T-cell (primary cell): ENCODE measurements at regions of chr4 and their contacts with region 1.

Region 1: GRCh38 chr4:159460371-159460770 is 357.5 kb downstream of the RAPGEF2 start:
- DNase-seq: no peak
- ATAC-seq: no peak
- H3K4me3 ChIP-seq: no peak overlapping the region
- H3K4me3 Mint-ChIP-seq: no peak overlapping the region
- H3K27ac ChIP-seq: no peak overlapping the region
- H3K27ac Mint-ChIP-seq: no peak overlapping the region
- H3K4me1 ChIP-seq: no peaks in the 10 kb centered on the region
- H3K4me1 Mint-ChIP-seq: peaks cover 0 to 3% (median 3%) of the 10 kb centered on the region in 3 donors
- H3K27me3 ChIP-seq: no peaks in the 10 kb centered on the region
- H3K27me3 Mint-ChIP-seq: no peaks in the 10 kb centered on the region

Region 2: DNA sequence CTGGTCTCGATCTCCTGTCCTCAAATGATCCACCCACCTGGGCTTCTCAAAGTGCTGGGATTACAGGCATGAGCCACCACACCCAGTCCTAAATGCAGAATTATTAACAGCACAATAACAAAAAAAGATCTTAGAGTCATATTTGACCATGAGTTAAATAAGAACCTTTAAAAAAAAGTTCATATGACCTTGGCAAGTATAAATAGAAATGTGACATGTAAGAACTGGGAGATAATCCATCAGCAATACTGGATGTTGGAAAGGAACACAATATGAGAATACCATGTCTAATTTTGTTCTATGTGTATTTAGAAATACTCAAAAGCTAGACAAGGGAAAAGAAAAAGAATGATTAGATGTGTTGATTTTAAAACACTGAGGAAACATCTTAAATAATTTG is 125.9 kb before region 1 on chr4:
- CTCF ChIA-PET with region 1: interaction called in 1 of 2 experiments, 10 read pairs
- POLR2A ChIA-PET with region 1: no interaction called
- DNase-seq: no peak
- ATAC-seq: no peak
- H3K4me3 ChIP-seq: no peak overlapping the region
- H3K4me3 Mint-ChIP-seq: no peak overlapping the region
- H3K27ac ChIP-seq: no peak overlapping the region
- H3K27ac Mint-ChIP-seq: no peak overlapping the region
- H3K4me1 ChIP-seq: no peaks in the 10 kb centered on the region
- H3K4me1 Mint-ChIP-seq: no peaks in the 10 kb centered on the region
- H3K27me3 ChIP-seq: no peaks in the 10 kb centered on the region
- H3K27me3 Mint-ChIP-seq: no peaks in the 10 kb centered on the region

Region 3: GRCh38 chr4:159446266-159446976 is 13.9 kb before region 1 on chr4:
- CTCF ChIA-PET with region 1: no interaction called
- POLR2A ChIA-PET with region 1: no interaction called
- DNase-seq: peak in 1 of 35 experiments; percentile 28
- ATAC-seq: peak in 2 of 4 experiments; percentile 54
- H3K4me3 ChIP-seq: no peak overlapping the region
- H3K4me3 Mint-ChIP-seq: no peak overlapping the region
- H3K27ac ChIP-seq: no peak overlapping the region
- H3K27ac Mint-ChIP-seq: no peak overlapping the region
- H3K4me1 ChIP-seq: no peaks in the 10 kb centered on the region
- H3K4me1 Mint-ChIP-seq: no peaks in the 10 kb centered on the region
- H3K27me3 ChIP-seq: peaks cover 0 to 3% of the 10 kb centered on the region in 2 experiments
- H3K27me3 Mint-ChIP-seq: peaks cover 7 to 20% of the 10 kb centered on the region in 2 donors

Region 4: DNA sequence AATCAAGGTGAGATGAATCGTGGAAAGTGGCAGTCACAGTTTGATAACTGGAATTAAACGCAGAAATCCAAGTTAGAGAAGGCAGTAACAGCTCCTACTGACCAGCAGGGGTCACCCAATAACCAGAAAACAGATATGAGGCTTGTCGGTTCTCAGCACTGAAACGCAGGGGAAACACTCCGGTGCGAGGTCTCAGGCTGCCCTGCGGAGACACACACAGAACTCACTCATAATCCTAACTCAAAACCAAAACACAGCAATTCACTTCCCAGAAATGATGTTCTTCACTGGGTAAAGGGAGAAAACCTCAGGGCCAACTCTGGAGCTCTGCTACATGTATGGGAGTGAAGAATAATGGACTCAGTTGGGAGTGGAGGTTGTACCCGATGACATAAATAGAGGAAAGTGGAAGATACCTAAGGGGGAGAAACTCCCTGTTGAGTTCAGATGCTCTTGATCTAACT is 26.9 kb after region 1 on chr4:
- CTCF ChIA-PET with region 1: no interaction called
- POLR2A ChIA-PET with region 1: interaction called in 1 of 2 experiments, 11 read pairs
- DNase-seq: peak in 5 of 35 experiments; percentile 2 to 51 (median 5)
- ATAC-seq: peak in 1 of 4 experiments; percentile 43
- H3K4me3 ChIP-seq: no peak overlapping the region
- H3K4me3 Mint-ChIP-seq: no peak overlapping the region
- H3K27ac ChIP-seq: no peak overlapping the region
- H3K27ac Mint-ChIP-seq: no peak overlapping the region
- H3K4me1 ChIP-seq: no peaks in the 10 kb centered on the region
- H3K4me1 Mint-ChIP-seq: no peaks in the 10 kb centered on the region
- H3K27me3 ChIP-seq: no peaks in the 10 kb centered on the region
- H3K27me3 Mint-ChIP-seq: peaks cover 10 to 25% of the 10 kb centered on the region in 2 donors